A673 (cell line): ENCODE measurements at regions of chr20 and their contacts with region 1.

Region 1: DNA sequence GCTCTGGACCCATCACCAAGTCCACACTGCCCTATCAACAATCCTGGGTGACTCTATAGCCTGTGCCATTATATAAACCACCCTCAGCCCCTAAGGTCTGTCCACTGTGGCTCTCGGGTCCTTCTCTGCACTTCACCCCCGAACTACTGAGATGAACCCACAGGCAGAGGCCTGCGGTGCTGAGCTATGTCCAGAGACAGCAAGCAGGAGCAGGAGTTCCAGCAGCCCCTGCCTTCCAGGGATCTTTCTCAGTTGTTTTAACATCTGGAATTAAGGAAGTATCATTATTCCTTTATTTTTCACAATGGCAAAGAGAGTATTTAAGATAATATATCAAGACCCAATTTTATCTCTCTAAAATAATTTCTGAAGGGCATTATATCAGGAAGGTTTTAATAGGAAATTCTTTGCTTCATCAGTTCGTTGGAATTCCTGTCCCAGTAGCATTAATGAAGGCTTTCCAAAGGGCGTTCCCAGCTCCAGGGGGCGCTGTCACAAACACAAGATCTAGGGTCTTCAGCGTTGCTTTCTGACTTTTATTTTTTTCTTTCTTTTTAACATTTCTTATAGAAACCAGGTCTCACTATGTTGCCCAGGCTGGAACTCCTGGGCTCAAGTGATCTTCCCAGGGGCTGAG is 27.3 kb downstream of the RRBP1 start:
- DNase-seq: peak; percentile 71
- H3K4me3 ChIP-seq: no peak overlapping the region
- H3K27ac ChIP-seq: peak overlapping the region; percentile 45
- H3K4me1 ChIP-seq: peaks cover 34% of the 10 kb centered on the region
- H3K27me3 ChIP-seq: no peaks in the 10 kb centered on the region
- CTCF ChIP-seq: peak; percentile 89

Region 2: GRCh38 chr20:17898548-17898994 is 243.8 kb after region 1 on chr20:
- CTCF ChIA-PET with region 1: no interaction called
- POLR2A ChIA-PET with region 1: no interaction called
- intact Hi-C with region 1: loop called (anchors 5 kb)
- DNase-seq: peak; percentile 73
- H3K4me3 ChIP-seq: no peak overlapping the region
- H3K27ac ChIP-seq: no peak overlapping the region
- H3K4me1 ChIP-seq: peaks cover 7% of the 10 kb centered on the region
- H3K27me3 ChIP-seq: no peaks in the 10 kb centered on the region
- CTCF ChIP-seq: peak; percentile 88